Activated CD8-positive, alpha-beta T cell treated with anti-CD3 and anti-CD28 coated beads for 36 hours (primary cell): ENCODE measurements at regions of chr21 and their contacts with region 1.

Region 1: DNA sequence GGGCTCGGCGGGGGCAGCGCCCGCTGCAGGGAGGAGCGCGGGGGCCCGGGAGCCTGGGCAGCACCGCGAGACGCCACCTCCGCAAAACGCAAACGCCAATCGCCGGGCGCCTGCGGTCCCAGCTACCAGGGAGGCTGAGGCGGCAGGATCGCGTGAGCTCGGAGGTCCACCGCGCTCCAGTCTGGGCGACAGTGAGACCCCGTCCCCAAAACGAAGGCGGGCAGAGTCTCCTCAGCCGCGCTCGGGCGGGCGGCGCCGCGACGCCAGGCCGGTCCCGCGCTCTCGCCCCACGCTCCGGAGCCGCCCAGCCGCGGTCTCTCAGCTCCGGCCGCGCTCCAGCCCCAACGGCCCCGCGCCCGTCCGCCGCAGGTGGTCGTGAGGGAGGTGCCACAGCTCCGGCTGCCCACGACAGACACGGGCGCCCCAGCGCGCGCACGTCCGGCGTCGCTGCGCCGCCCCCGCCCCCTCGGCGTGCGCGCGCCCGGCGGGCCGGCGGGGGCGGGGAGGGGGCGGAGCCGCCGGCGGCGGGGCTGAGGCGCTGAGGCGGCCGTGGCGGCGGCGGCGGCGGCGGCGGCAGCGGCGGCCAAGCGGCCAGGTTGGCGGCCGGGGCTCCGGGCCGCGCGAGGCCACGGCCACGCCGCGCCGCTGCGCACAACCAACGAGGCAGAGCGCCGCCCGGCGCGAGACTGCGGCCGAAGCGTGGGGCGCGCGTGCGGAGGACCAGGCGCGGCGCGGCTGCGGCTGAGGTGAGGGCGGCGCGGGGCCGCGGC is at the start of gene ADARB1:
- DNase-seq: peak; percentile 56
- ATAC-seq: peak; percentile 40
- H3K4me3 Mint-ChIP-seq: peak within 1 kb of the TSS; percentile 87
- H3K27ac Mint-ChIP-seq: peak within 1 kb of the TSS; percentile 87
- H3K4me1 Mint-ChIP-seq: peaks cover 39% of the 10 kb centered on the region
- H3K27me3 Mint-ChIP-seq: no peaks in the 10 kb centered on the region
- CTCF ChIP-seq: no peak
- total RNA-seq, gene ADARB1: 36.2 to 37.1 TPM

Region 2: DNA sequence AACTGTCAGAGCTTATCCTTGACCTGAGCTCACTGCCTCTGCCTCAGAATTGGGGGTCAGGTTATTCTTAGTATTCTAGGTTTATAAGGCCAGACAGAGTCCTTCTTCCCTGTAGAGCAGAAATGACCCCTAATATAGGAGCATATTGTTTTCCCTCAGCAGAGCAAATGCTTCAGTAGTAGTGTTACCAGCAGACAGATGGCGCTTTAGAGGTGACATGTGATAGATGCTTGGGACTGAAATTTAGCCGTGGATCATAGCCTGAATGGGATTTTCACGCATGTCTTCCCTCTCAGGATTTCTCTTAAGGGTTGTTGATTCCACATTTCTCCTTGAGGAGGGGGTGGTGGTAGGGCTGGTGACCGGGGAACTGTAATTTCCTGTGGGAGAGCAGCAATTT is 24.6 kb after region 1 on chr21:
- CTCF ChIA-PET with region 1: interaction called, 21 read pairs
- POLR2A ChIA-PET with region 1: interaction called, 3 read pairs
- intact Hi-C with region 1: no loop called
- DNase-seq: no peak
- ATAC-seq: no peak
- H3K4me3 Mint-ChIP-seq: no peak overlapping the region
- H3K27ac Mint-ChIP-seq: no peak overlapping the region
- H3K4me1 Mint-ChIP-seq: peaks cover 26% of the 10 kb centered on the region
- H3K27me3 Mint-ChIP-seq: no peaks in the 10 kb centered on the region
- CTCF ChIP-seq: peak; percentile 31

Region 3: GRCh38 chr21:45104560-45104959 is 30.3 kb after region 1 on chr21:
- CTCF ChIA-PET with region 1: interaction called, 21 read pairs
- POLR2A ChIA-PET with region 1: interaction called, 16 read pairs
- intact Hi-C with region 1: no loop called
- DNase-seq: peak; percentile 62
- ATAC-seq: peak; percentile 82
- H3K4me3 Mint-ChIP-seq: peak overlapping the region; percentile 33
- H3K27ac Mint-ChIP-seq: peak overlapping the region; percentile 40
- H3K4me1 Mint-ChIP-seq: peaks cover 57% of the 10 kb centered on the region
- H3K27me3 Mint-ChIP-seq: no peaks in the 10 kb centered on the region
- CTCF ChIP-seq: no peak

Region 4: GRCh38 chr21:45120975-45121374 is 46.7 kb after region 1 on chr21:
- CTCF ChIA-PET with region 1: interaction called, 10 read pairs
- POLR2A ChIA-PET with region 1: no interaction called
- intact Hi-C with region 1: no loop called
- DNase-seq: no peak
- ATAC-seq: no peak
- H3K4me3 Mint-ChIP-seq: no peak overlapping the region
- H3K27ac Mint-ChIP-seq: no peak overlapping the region
- H3K4me1 Mint-ChIP-seq: peaks cover 5% of the 10 kb centered on the region
- H3K27me3 Mint-ChIP-seq: no peaks in the 10 kb centered on the region
- CTCF ChIP-seq: no peak